ENCODE measurements at regions of chr2 and their contacts with region 1.

Region 1: DNA sequence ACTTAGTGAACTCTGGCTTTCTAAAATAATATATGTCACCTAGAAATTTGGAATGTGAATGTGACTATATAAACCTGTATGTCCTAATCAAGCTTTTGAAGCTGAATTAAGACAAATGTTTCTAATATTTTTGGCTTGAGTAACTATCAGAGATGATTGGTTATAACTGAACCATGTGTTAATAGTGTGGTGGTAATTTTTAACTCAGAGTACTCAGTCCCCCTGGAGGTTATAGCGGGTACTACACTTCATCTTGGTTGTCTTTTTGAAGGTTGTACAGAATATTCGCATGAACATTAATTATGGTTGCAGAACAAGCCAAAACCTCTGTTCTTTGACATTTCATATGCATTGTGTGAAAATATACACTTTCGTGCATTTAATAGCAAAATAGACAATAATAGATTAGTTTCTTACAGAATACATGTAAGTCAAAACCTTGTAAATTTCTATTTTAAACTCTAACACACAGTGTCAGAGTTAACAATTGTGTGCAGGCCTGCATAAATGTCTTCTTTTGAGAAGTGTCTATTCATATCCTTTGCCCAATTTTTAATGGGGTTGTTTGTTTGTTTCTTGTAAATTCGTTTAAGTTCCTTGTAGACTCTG is 86.0 kb downstream of the OSBPL6 start:
- DNase-seq: peak; percentile 27
- H3K4me3 ChIP-seq: no peak overlapping the region
- CTCF ChIP-seq: peak; percentile 53

Region 2: GRCh38 chr2:178142274-178143065 is 137.9 kb before region 1 on chr2:
- in situ Hi-C with region 1: loop called (anchors 25 kb)
- DNase-seq: no peak
- H3K4me3 ChIP-seq: no peak overlapping the region
- CTCF ChIP-seq: no peak

Region 3: GRCh38 chr2:178193823-178194599 is 86.3 kb before region 1 on chr2 and contains the start of gene OSBPL6:
- in situ Hi-C with region 1: loop called (anchors 10 kb)
- DNase-seq: peak; percentile 60
- H3K4me3 ChIP-seq: peak within 1 kb of the TSS; percentile 91
- CTCF ChIP-seq: no peak

Region 4: GRCh38 chr2:178251151-178251955 is 29.0 kb before region 1 on chr2:
- in situ Hi-C with region 1: no loop called
- DNase-seq: no peak
- H3K4me3 ChIP-seq: no peak overlapping the region
- CTCF ChIP-seq: no peak

Measured in astrocyte of the cerebellum (primary cell).